MCF 10A (cell line): ENCODE measurements at regions of chr11 and their contacts with region 1.

Region 1: DNA sequence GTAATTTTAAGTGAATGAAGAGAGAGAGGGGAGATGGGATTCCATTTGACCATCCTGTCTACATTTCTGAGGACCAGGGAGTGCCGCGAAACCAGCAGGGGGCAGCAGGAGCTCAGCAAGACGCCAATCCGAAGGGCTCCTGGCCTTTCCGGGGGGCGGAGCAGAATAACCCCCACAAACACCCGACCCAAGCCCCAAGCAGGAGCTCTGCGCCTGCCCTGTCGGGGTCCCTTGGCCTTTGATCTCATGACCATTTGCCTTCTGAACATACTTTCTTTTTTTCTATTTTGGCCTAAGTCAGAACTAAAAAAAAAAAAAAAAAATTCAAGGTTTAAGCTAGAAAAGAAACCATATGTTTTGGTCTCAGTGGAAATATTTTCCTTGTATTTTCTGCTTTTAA is 21.9 kb upstream of the SCN2B start:
- DNase-seq: peak; percentile 53
- H3K4me3 Mint-ChIP-seq: no peak overlapping the region
- H3K27ac Mint-ChIP-seq: no peak overlapping the region
- H3K4me1 Mint-ChIP-seq: peaks cover 9% of the 10 kb centered on the region
- H3K27me3 Mint-ChIP-seq: no peaks in the 10 kb centered on the region
- CTCF ChIP-seq: peak; percentile 88

Region 2: DNA sequence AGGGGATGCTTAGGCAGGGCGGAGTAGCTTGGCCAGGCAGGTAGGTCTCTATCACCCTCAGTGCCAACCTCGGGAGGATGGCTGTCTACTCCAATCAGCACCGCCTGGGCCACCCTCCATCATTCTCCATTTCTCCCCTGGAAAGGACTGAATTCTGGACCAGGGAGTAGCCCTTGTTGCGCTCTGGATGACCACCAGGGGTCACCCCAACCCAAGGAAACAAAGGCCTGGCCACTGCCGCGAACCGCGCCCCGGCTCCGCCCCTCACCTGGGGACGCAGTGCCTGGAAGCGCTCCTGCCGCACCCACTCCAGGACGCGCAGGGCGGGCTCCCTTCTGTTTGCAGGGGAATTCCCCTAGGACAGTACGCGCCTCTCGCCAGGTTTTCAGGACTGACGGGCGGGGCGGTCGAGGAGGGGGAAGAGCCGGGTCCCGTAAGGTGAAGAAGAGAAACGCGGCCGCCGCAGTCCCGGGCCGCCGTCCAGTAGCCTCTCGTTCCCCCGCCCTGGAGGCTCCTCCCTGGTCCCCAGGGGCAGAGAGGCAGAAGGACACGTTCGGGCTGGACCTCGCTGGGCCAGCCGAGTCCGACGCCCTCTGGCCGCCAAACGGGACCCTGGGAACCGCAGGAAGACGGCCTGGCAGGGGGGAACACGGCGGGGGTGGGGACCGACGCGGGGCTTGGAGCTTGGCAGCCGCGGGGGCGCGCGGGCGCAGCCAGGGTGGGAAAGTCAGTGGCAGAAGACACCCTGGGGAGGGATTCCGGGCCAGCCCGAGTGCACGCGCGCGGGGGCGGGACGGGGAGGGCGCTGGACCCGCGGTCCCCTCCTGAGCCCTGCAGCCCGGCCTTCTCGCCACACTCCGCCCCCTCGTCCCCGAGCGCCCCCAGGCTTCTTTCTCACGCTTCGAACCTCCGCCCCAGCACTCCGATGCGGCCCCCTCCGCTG is 52.8 kb before region 1 on chr11:
- CTCF ChIA-PET with region 1: interaction called, 14 read pairs
- POLR2A ChIA-PET with region 1: no interaction called
- intact Hi-C with region 1: loop called (anchors 1 kb)
- DNase-seq: peak; percentile 88
- H3K4me3 Mint-ChIP-seq: peak overlapping the region; percentile 74
- H3K27ac Mint-ChIP-seq: peak overlapping the region; percentile 66
- H3K4me1 Mint-ChIP-seq: peaks cover 15% of the 10 kb centered on the region
- H3K27me3 Mint-ChIP-seq: peaks cover 15% of the 10 kb centered on the region
- CTCF ChIP-seq: peak; percentile 92

Region 3: GRCh38 chr11:118222435-118222834 is 24.1 kb after region 1 on chr11:
- CTCF ChIA-PET with region 1: interaction called, 6 read pairs
- POLR2A ChIA-PET with region 1: no interaction called
- intact Hi-C with region 1: loop called (anchors 1 kb)
- DNase-seq: no peak
- H3K4me3 Mint-ChIP-seq: no peak overlapping the region
- H3K27ac Mint-ChIP-seq: no peak overlapping the region
- H3K4me1 Mint-ChIP-seq: no peaks in the 10 kb centered on the region
- H3K27me3 Mint-ChIP-seq: peaks cover 15% of the 10 kb centered on the region
- CTCF ChIP-seq: no peak

Region 4: GRCh38 chr11:118263695-118264567 is 65.6 kb after region 1 on chr11 and contains the start of gene MPZL2:
- CTCF ChIA-PET with region 1: interaction called, 5 read pairs
- POLR2A ChIA-PET with region 1: interaction called, 15 read pairs
- intact Hi-C with region 1: no loop called
- DNase-seq: peak; percentile 93
- H3K4me3 Mint-ChIP-seq: peak within 1 kb of the TSS; percentile 93
- H3K27ac Mint-ChIP-seq: peak within 1 kb of the TSS; percentile 95
- H3K4me1 Mint-ChIP-seq: peaks cover 44% of the 10 kb centered on the region
- H3K27me3 Mint-ChIP-seq: no peaks in the 10 kb centered on the region
- CTCF ChIP-seq: no peak
- total RNA-seq, gene MPZL2: 7.0 and 13.7 TPM in 2 replicates

Region 5: DNA sequence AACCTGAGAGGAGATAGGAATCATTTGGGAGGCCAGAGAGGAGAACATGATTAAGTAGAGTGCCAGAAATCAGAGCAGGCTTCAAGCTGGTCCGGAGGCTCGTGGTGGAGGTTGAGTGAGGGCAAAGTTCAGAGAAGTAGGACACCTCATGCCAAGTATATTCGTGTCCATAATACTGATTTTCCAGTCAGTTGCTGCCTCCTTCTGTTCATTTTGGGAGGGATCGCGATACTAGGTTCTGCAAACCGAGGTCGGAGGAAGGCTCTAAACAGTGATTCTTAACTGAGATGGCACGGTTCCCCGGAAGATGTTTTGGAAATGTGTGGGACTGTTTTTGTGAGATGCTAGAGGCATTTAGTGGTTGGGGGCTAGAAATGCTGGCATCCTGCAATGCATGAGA is 92.6 kb after region 1 on chr11:
- CTCF ChIA-PET with region 1: interaction called, 58 read pairs
- POLR2A ChIA-PET with region 1: interaction called, 8 read pairs
- intact Hi-C with region 1: loop called (anchors 1 kb)
- DNase-seq: peak; percentile 75
- H3K4me3 Mint-ChIP-seq: peak overlapping the region; percentile 19
- H3K27ac Mint-ChIP-seq: no peak overlapping the region
- H3K4me1 Mint-ChIP-seq: peaks cover 19% of the 10 kb centered on the region
- H3K27me3 Mint-ChIP-seq: no peaks in the 10 kb centered on the region
- CTCF ChIP-seq: peak; percentile 43

Region 6: GRCh38 chr11:118364956-118365615 is 166.7 kb after region 1 on chr11:
- CTCF ChIA-PET with region 1: interaction called, 16 read pairs
- POLR2A ChIA-PET with region 1: interaction called, 3 read pairs
- intact Hi-C with region 1: no loop called
- DNase-seq: no peak
- H3K4me3 Mint-ChIP-seq: no peak overlapping the region
- H3K27ac Mint-ChIP-seq: no peak overlapping the region
- H3K4me1 Mint-ChIP-seq: no peaks in the 10 kb centered on the region
- H3K27me3 Mint-ChIP-seq: no peaks in the 10 kb centered on the region
- CTCF ChIP-seq: no peak

Region 7: DNA sequence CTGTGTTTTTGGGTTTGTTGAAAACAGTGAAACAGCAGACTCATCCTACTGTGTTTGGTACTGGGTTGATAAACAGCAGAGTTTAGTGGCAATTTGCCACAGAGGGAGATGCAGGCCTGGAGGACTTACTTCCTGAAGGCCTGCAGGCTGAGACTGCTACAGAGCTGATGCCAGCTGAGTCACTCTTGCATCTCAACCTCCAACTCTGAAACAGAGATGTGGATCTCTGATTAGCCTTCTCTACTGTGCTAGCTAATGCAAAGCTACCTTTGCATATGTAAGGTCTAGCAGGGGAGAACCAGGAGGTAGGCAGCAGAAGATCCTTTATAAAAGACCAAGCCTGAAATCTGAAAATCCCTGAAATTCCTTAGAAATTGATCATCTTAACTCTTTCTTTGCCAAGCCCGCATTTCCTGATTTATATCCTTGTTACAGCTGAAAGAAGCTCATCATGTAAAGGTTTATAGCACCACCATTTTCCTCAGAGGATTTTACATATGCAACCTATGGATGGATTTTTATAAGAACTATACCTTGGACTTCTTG is 217.4 kb after region 1 on chr11:
- CTCF ChIA-PET with region 1: no interaction called
- POLR2A ChIA-PET with region 1: no interaction called
- intact Hi-C with region 1: no loop called
- DNase-seq: peak; percentile 84
- H3K4me3 Mint-ChIP-seq: no peak overlapping the region
- H3K27ac Mint-ChIP-seq: no peak overlapping the region
- H3K4me1 Mint-ChIP-seq: no peaks in the 10 kb centered on the region
- H3K27me3 Mint-ChIP-seq: no peaks in the 10 kb centered on the region
- CTCF ChIP-seq: no peak